IMR-90 (cell line): ENCODE measurements at regions of chr14 and their contacts with region 1.

Region 1: DNA sequence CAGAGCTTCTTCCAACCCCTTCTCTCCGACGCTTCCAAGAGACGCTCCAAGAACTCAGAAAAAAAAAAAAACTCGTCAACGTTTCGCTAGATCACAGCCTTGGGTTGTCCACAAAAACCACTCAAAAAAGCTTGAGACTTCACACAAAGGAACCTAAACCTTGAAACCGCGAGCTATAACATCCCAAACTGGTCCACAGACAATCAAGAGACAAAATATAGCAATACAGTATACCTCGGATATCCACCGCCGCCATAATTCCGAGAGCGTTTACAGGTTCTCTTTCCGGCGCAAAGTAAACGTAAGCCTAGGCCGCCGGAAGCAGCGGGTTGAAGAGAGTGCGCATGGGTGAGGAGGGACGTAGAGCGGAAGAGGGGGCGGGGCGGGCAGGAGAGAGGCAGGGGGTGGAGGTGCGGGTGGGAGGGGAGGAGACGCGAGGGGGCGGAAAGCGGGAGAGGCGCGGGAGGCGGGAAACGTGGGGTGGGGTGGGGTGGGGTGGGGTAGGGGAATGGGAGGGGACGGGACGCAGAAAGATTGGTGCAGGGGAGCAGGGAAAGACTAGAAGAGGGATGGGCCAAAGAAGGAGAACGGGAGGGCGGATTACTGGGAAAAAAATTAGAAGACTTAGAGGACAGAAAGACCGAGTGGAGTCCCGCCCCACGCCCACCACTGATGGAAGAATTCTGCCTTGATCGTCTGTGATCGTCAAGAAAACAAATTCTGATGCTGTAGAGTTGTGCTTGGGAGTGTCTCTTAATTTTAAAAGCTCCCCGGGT is at the start of gene MED6:
- DNase-seq: peak; percentile 86
- ATAC-seq: peak; percentile 96
- H3K4me3 ChIP-seq: peak within 1 kb of the TSS; percentile 90
- H3K27ac ChIP-seq: peak within 1 kb of the TSS; percentile 62
- H3K4me1 ChIP-seq: peaks cover 3% of the 10 kb centered on the region; the same call in 1 of the 2 replicates
- H3K27me3 ChIP-seq: no peaks in the 10 kb centered on the region
- CTCF ChIP-seq: no peak
- POLR2A ChIP-seq: peak; percentile 75; the same call in 1 of the 2 replicates
- RAD21 ChIP-seq: no peak
- total RNA-seq, gene MED6: 31.5 and 38.6 TPM in 2 replicates

Region 2: GRCh38 chr14:70359181-70360090 is 241.1 kb before region 1 on chr14 and contains the start of gene COX16:
- CTCF ChIA-PET with region 1: no interaction called
- POLR2A ChIA-PET with region 1: no interaction called
- dilution Hi-C with region 1: no loop called
- in situ Hi-C with region 1: no loop called
- intact Hi-C with region 1: loop called (anchors 2 kb)
- DNase-seq: peak; percentile 98
- ATAC-seq: peak; percentile 94
- H3K4me3 ChIP-seq: peak within 1 kb of the TSS; percentile 75
- H3K27ac ChIP-seq: peak within 1 kb of the TSS; percentile 83
- H3K4me1 ChIP-seq: peaks cover 3% of the 10 kb centered on the region; the same call in 1 of the 2 replicates
- H3K27me3 ChIP-seq: no peaks in the 10 kb centered on the region
- CTCF ChIP-seq: no peak
- POLR2A ChIP-seq: peak; percentile 73
- RAD21 ChIP-seq: no peak
- total RNA-seq, gene COX16: 23.1 and 49.2 TPM in 2 replicates

Region 3: GRCh38 chr14:70907176-70907995 is 306.8 kb after region 1 on chr14 and contains the start of gene PCNX1:
- CTCF ChIA-PET with region 1: no interaction called
- POLR2A ChIA-PET with region 1: no interaction called
- dilution Hi-C with region 1: no loop called
- in situ Hi-C with region 1: no loop called
- intact Hi-C with region 1: no loop called
- DNase-seq: peak; percentile 79
- ATAC-seq: peak; percentile 89
- H3K4me3 ChIP-seq: peak within 1 kb of the TSS; percentile 97
- H3K27ac ChIP-seq: peak within 1 kb of the TSS; percentile 87
- H3K4me1 ChIP-seq: peaks cover 17% of the 10 kb centered on the region
- H3K27me3 ChIP-seq: no peaks in the 10 kb centered on the region
- CTCF ChIP-seq: peak; percentile 80
- POLR2A ChIP-seq: peak; percentile 75
- RAD21 ChIP-seq: peak; percentile 62
- total RNA-seq, gene PCNX1: 43.7 and 45.3 TPM in 2 replicates

Region 4: GRCh38 chr14:70972107-70972976 is 371.8 kb after region 1 on chr14:
- CTCF ChIA-PET with region 1: no interaction called
- POLR2A ChIA-PET with region 1: no interaction called
- dilution Hi-C with region 1: no loop called
- in situ Hi-C with region 1: loop called (anchors 25 kb)
- intact Hi-C with region 1: no loop called
- DNase-seq: peak; percentile 88
- ATAC-seq: peak; percentile 90
- H3K4me3 ChIP-seq: no peak overlapping the region
- H3K27ac ChIP-seq: no peak overlapping the region
- H3K4me1 ChIP-seq: peaks cover 2% of the 10 kb centered on the region; the same call in 1 of the 2 replicates
- H3K27me3 ChIP-seq: no peaks in the 10 kb centered on the region
- CTCF ChIP-seq: peak; percentile 91
- POLR2A ChIP-seq: peak; percentile 22; the same call in 1 of the 2 replicates
- RAD21 ChIP-seq: peak; percentile 90

Region 5: DNA sequence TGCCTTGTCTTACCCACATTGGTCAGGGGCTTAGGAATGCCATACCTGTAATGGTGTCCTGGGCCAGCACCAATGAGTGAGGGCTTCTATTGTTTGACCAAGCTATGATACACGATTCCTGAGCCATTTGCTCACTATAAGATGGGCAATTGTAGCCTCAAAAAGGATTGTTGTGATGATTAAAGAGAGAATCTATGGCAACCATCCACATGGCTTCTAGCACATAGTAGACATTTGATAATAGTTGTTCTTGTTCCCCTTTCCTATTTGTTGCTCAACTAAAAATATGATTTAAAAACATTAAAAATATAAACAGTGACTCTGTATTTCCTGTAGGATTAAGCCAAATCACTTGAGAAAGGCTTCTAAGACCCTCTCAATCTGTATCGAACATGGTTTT is 672.8 kb after region 1 on chr14:
- CTCF ChIA-PET with region 1: no interaction called
- POLR2A ChIA-PET with region 1: no interaction called
- dilution Hi-C with region 1: no loop called
- in situ Hi-C with region 1: no loop called
- intact Hi-C with region 1: no loop called
- DNase-seq: no peak
- ATAC-seq: no peak
- H3K4me3 ChIP-seq: no peak overlapping the region
- H3K27ac ChIP-seq: no peak overlapping the region
- H3K4me1 ChIP-seq: no peaks in the 10 kb centered on the region
- H3K27me3 ChIP-seq: no peaks in the 10 kb centered on the region; the same call in 1 of the 2 replicates
- CTCF ChIP-seq: no peak
- POLR2A ChIP-seq: no peak
- RAD21 ChIP-seq: no peak

Region 6: DNA sequence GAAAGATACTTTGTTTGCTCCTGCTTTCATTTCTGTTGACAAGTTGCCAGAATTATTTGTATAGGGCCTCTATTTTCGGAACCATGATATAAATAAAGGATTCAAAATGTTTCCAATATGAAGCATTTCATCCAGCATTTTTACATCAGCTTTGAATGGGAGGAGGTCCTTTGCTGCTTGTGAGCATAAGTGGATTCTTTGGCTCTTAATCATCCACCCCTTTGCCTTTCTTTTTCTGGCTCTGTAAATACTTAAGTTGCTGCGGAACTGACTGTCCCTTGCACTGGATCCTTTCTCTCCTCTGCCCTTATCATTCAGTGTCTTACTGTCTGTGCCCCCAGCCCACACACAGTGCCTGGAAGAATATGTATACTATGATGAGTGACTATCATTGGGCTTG is 974.4 kb after region 1 on chr14:
- CTCF ChIA-PET with region 1: no interaction called
- POLR2A ChIA-PET with region 1: no interaction called
- dilution Hi-C with region 1: no loop called
- in situ Hi-C with region 1: no loop called
- intact Hi-C with region 1: no loop called
- DNase-seq: peak; percentile 92
- ATAC-seq: peak; percentile 97
- H3K4me3 ChIP-seq: no peak overlapping the region
- H3K27ac ChIP-seq: peak overlapping the region; percentile 70; the same call in 1 of the 2 replicates
- H3K4me1 ChIP-seq: peaks cover 12% of the 10 kb centered on the region
- H3K27me3 ChIP-seq: no peaks in the 10 kb centered on the region
- CTCF ChIP-seq: no peak
- POLR2A ChIP-seq: no peak
- RAD21 ChIP-seq: no peak